HCT116 (cell line): ENCODE measurements at regions of chr6 and their contacts with region 1.

Region 1: DNA sequence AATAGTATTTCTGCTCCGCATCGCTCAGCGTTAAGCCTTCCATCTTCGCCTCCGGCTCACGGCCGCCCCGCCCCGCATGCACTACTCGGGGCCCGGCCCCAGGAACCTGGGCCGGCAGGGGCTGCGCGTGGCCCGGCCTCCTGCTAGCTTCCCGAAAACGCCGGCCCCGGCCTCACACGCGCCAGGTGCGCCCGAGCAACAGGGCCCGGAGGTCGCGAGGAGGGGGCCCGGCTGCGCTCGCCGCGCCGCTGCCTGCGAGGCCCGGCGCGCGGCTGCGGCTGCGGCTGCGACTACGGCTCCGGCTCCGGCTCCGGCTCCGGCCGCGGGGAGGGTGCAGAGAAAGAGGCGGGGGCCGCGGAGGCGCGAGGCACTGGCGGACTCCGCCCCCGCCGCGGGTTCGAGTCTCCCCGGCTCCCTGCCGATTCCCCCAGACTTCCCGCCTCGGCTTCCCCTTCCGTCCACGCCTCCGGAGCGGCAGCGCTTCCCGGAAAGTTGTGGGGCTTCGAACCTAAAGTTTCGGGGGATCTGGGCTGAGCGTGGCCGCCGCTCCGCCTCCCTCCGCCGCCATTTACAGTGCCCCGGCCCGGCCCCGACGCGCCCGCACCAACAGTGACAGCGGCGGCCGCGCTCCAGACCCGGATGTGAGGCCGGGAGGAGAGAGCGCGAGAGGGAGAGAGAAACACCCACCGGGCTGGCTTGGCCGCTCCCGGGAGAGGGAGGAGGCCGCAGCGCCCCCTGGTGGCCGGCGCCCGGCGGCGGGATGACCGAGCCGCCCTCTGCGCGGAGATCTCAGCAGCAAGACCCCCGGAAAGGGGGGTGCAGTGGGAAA is at the start of gene REPS1:
- DNase-seq: peak; percentile 78
- ATAC-seq: peak; percentile 90
- H3K4me3 ChIP-seq: peak within 1 kb of the TSS; percentile 81 to 83
- H3K27ac ChIP-seq: peak within 1 kb of the TSS; percentile 72
- H3K4me1 ChIP-seq: peaks cover 16 to 36% of the 10 kb centered on the region in 2 experiments; a peak in 3 of 4 replicates
- H3K27me3 ChIP-seq: no peaks in the 10 kb centered on the region
- CTCF ChIP-seq: peak; percentile 73 to 82 (median 80)
- POLR2A ChIP-seq: peak; percentile 29
- RAD21 ChIP-seq: peak; percentile 80
- total RNA-seq, gene REPS1: 52.7 TPM

Region 2: DNA sequence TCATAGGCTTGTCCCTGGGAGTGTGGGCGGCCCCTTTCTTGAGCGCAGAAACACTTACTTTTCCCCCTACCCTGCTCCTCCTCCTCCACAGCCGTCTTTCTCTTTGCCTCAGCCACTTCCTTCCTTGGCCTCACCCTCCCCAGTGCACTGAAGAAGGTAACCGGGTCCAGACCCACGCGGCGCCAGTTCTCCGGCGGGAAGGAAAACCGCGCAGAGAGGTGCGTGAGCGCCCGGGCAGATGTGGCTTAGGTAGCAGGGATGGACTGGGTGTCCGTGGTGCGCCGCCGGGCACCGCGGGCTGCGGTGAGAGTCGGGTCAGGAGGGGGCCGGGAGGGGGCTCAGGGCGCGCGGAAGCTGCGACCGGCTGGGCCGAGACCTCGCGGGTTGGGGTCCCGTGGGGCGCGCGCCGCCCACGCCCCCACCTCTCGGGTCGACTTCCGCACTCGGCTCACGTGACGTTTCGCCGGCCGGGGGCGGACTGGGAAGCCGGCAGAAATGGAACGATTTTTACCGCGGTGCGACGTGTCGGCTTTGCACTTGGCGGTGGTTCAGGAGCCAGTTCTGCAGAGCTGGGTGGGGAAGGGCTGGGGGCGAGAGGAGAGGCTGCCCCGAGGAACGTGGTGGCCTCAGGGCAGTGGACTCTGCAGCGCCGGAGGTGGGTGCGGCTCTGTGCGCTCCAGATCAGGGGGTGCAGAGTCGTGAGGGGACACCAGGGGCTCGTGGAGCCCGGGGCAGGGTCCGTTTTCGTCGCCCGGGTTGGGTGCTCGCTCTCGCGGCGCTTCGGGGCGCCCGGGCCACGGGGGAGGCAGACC is 41.0 kb after region 1 on chr6 and contains the start of gene ABRACL:
- CTCF ChIA-PET with region 1: no interaction called
- POLR2A ChIA-PET with region 1: no interaction called
- RAD21 ChIA-PET with region 1: no interaction called
- intact Hi-C with region 1: loop called (anchors 2 kb)
- DNase-seq: peak; percentile 56
- ATAC-seq: peak; percentile 88
- H3K4me3 ChIP-seq: peak within 1 kb of the TSS; percentile 71 to 75
- H3K27ac ChIP-seq: peak within 1 kb of the TSS; percentile 61
- H3K4me1 ChIP-seq: peaks cover 0 to 25% of the 10 kb centered on the region in 2 experiments; a peak in 3 of 4 replicates
- H3K27me3 ChIP-seq: no peaks in the 10 kb centered on the region
- CTCF ChIP-seq: no peak
- POLR2A ChIP-seq: peak; percentile 40
- RAD21 ChIP-seq: no peak
- total RNA-seq, gene ABRACL: 47.4 TPM